Head of caudate nucleus (tissue), 42 donors: ENCODE measurements at regions of chr5 and their contacts with region 1.

Region 1: GRCh38 chr5:80407735-80408482 is at the start of gene ZFYVE16:
- DNase-seq: peak; percentile 95 to 100 (median 98)

Region 2: GRCh38 chr5:80308526-80308925 is 99.4 kb before region 1 on chr5:
- intact Hi-C with region 1: no loop called
- DNase-seq: no peak

Region 3: DNA sequence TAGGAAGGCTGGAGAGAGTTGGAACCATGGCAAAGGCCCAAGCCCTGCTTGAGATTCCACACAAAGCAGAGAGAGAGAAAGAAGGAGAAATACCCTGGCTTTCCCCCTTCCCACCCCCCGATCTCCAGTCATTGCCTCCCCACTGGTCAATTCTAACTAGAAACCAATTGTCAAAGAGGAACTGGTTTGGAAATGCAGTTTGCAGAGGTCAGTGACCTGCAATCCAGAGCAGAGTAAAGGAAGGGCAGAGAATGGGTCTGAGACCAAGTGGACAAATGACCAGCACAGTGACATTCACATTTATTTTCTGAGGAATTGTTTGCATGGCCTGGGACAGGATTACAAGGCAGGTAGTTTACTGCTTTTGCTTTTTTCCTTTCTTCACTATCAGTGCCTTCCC is 37.5 kb before region 1 on chr5:
- intact Hi-C with region 1: loop called (anchors 5 kb)
- DNase-seq: peak in 4 of 42 donors; percentile 9 to 30 (median 14)